Natural killer cell (primary cell): ENCODE measurements at regions of chr17 and their contacts with region 1.

Region 1: GRCh38 chr17:16521070-16521727 is 29.2 kb upstream of the LRRC75A start:
- DNase-seq: peak; percentile 41 to 87
- ATAC-seq: peak; percentile 94 to 99 (median 98)
- H3K4me3 ChIP-seq: no peak overlapping the region
- H3K4me3 Mint-ChIP-seq: no peak overlapping the region
- H3K27ac ChIP-seq: no peak overlapping the region
- H3K27ac Mint-ChIP-seq: peak overlapping the region in 1 of 2 donors; percentile 53
- H3K4me1 ChIP-seq: peaks cover 7% of the 10 kb centered on the region
- H3K4me1 Mint-ChIP-seq: peaks cover 6 to 7% of the 10 kb centered on the region in 2 donors
- H3K27me3 ChIP-seq: peaks cover 2% of the 10 kb centered on the region
- H3K27me3 Mint-ChIP-seq: peaks cover 17 to 22% of the 10 kb centered on the region in 2 donors
- CTCF ChIP-seq: peak; percentile 79

Region 2: DNA sequence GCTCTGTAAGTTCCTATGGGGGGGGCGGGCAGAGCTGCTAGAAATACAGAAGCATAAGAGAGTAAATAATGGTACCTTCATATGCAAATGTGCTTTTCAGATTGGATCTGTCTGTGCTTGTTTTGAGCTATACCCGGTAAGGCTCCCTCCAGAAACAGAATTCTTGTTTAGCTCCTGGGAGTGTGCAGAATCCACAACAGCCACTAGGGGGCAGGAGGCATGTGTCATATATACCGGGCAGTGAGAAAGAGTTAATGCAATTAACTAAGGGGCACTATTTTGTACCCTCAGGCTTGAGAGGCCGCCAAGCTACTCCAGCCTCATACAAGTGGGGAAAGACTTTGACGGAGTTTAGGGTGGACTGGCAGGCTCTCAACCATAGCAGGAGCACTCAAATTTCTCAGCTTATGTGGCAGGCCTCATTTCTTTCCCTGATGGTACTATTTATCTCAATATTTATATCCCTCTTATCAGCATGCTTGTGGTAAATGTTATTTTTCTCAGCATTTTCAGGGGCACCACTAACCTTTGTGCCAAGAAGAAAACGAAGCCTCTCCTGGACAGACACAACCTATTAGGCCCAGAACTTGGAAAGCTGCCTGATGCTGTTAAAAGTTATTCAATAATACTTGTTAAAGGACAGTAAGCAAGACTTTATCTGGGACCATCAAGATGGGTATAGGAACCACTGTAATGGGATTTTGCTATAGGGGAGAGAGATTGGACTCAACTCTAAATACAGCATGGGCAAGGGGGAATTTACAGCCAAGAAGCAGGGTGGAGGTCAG is 157.3 kb before region 1 on chr17:
- intact Hi-C with region 1: loop called (anchors 1 kb)
- DNase-seq: peak; percentile 60 to 86
- ATAC-seq: peak; percentile 86 to 99 (median 97)
- H3K4me3 ChIP-seq: no peak overlapping the region
- H3K4me3 Mint-ChIP-seq: no peak overlapping the region
- H3K27ac ChIP-seq: no peak overlapping the region
- H3K27ac Mint-ChIP-seq: no peak overlapping the region
- H3K4me1 ChIP-seq: no peaks in the 10 kb centered on the region
- H3K4me1 Mint-ChIP-seq: no peaks in the 10 kb centered on the region
- H3K27me3 ChIP-seq: no peaks in the 10 kb centered on the region
- H3K27me3 Mint-ChIP-seq: no peaks in the 10 kb centered on the region
- CTCF ChIP-seq: peak; percentile 95

Region 3: GRCh38 chr17:16380640-16381495 is 140.3 kb before region 1 on chr17 and contains the start of gene UBB:
- intact Hi-C with region 1: loop called (anchors 2 kb)
- DNase-seq: peak; percentile 91 to 98
- ATAC-seq: peak; percentile 86 to 95 (median 87)
- H3K4me3 ChIP-seq: peak within 1 kb of the TSS; percentile 58
- H3K4me3 Mint-ChIP-seq: peak within 1 kb of the TSS; percentile 99
- H3K27ac ChIP-seq: peak within 1 kb of the TSS; percentile 90
- H3K27ac Mint-ChIP-seq: peak within 1 kb of the TSS; percentile 99 to 100
- H3K4me1 ChIP-seq: peaks cover 22% of the 10 kb centered on the region
- H3K4me1 Mint-ChIP-seq: peaks cover 40 to 45% of the 10 kb centered on the region in 2 donors
- H3K27me3 ChIP-seq: no peaks in the 10 kb centered on the region
- H3K27me3 Mint-ChIP-seq: no peaks in the 10 kb centered on the region
- CTCF ChIP-seq: no peak
- total RNA-seq, gene UBB: 1,492 to 1,665 (median 1,530) TPM

Region 4: GRCh38 chr17:16453493-16453851 is 67.7 kb before region 1 on chr17:
- intact Hi-C with region 1: loop called (anchors 1 kb)
- DNase-seq: no peak
- ATAC-seq: peak in 2 of 3 donors; percentile 7 to 12
- H3K4me3 ChIP-seq: no peak overlapping the region
- H3K4me3 Mint-ChIP-seq: no peak overlapping the region
- H3K27ac ChIP-seq: no peak overlapping the region
- H3K27ac Mint-ChIP-seq: peak overlapping the region in 1 of 2 donors; percentile 63
- H3K4me1 ChIP-seq: no peaks in the 10 kb centered on the region
- H3K4me1 Mint-ChIP-seq: peaks cover 12 to 22% of the 10 kb centered on the region in 2 donors
- H3K27me3 ChIP-seq: no peaks in the 10 kb centered on the region
- H3K27me3 Mint-ChIP-seq: no peaks in the 10 kb centered on the region
- CTCF ChIP-seq: no peak

Region 5: GRCh38 chr17:16506188-16506587 is 15.0 kb before region 1 on chr17:
- intact Hi-C with region 1: no loop called
- DNase-seq: no peak
- ATAC-seq: no peak
- H3K4me3 ChIP-seq: no peak overlapping the region
- H3K4me3 Mint-ChIP-seq: no peak overlapping the region
- H3K27ac ChIP-seq: no peak overlapping the region
- H3K27ac Mint-ChIP-seq: no peak overlapping the region
- H3K4me1 ChIP-seq: peaks cover 2% of the 10 kb centered on the region
- H3K4me1 Mint-ChIP-seq: no peaks in the 10 kb centered on the region
- H3K27me3 ChIP-seq: no peaks in the 10 kb centered on the region
- H3K27me3 Mint-ChIP-seq: peaks cover 0 to 12% of the 10 kb centered on the region in 2 donors
- CTCF ChIP-seq: no peak